Activated CD4-positive, alpha-beta T cell treated with anti-CD3 and anti-CD28 coated beads for 36 hours (primary cell): ENCODE measurements at regions of chr6 and their contacts with region 1.

Region 1: GRCh38 chr6:159125014-159125609 is 44.1 kb upstream of the FNDC1 start:
- DNase-seq: no peak
- ATAC-seq: no peak
- H3K4me3 Mint-ChIP-seq: no peak overlapping the region
- H3K27ac Mint-ChIP-seq: no peak overlapping the region
- H3K4me1 Mint-ChIP-seq: peaks cover 2% of the 10 kb centered on the region
- H3K27me3 Mint-ChIP-seq: no peaks in the 10 kb centered on the region

Region 2: GRCh38 chr6:159008656-159009288 is 116.3 kb before region 1 on chr6:
- CTCF ChIA-PET with region 1: interaction called, 44 read pairs
- POLR2A ChIA-PET with region 1: no interaction called
- intact Hi-C with region 1: no loop called
- DNase-seq: no peak
- ATAC-seq: peak; percentile 74
- H3K4me3 Mint-ChIP-seq: peak overlapping the region; percentile 7
- H3K27ac Mint-ChIP-seq: no peak overlapping the region
- H3K4me1 Mint-ChIP-seq: peaks cover 36% of the 10 kb centered on the region
- H3K27me3 Mint-ChIP-seq: no peaks in the 10 kb centered on the region